ENCODE measurements at regions of chr15 and their contacts with region 1.

Region 1: GRCh38 chr15:89874926-89875564 is 18.7 kb downstream of the AP3S2 start:
- DNase-seq: peak; percentile 84
- H3K4me3 Mint-ChIP-seq: no peak overlapping the region
- H3K27ac Mint-ChIP-seq: no peak overlapping the region
- H3K4me1 Mint-ChIP-seq: peaks cover 5% of the 10 kb centered on the region
- H3K27me3 Mint-ChIP-seq: no peaks in the 10 kb centered on the region

Region 2: GRCh38 chr15:89750560-89751542 is 124.2 kb before region 1 on chr15 and contains the start of gene MESP1:
- CTCF ChIA-PET with region 1: interaction called, 22 read pairs
- POLR2A ChIA-PET with region 1: no interaction called
- DNase-seq: peak; percentile 90
- H3K4me3 Mint-ChIP-seq: peak within 1 kb of the TSS; percentile 68
- H3K27ac Mint-ChIP-seq: no peak within 1 kb of the TSS
- H3K4me1 Mint-ChIP-seq: peaks cover 6% of the 10 kb centered on the region
- H3K27me3 Mint-ChIP-seq: peaks cover 14% of the 10 kb centered on the region
- total RNA-seq, gene MESP1: 3.2 to 3.5 TPM

Region 3: DNA sequence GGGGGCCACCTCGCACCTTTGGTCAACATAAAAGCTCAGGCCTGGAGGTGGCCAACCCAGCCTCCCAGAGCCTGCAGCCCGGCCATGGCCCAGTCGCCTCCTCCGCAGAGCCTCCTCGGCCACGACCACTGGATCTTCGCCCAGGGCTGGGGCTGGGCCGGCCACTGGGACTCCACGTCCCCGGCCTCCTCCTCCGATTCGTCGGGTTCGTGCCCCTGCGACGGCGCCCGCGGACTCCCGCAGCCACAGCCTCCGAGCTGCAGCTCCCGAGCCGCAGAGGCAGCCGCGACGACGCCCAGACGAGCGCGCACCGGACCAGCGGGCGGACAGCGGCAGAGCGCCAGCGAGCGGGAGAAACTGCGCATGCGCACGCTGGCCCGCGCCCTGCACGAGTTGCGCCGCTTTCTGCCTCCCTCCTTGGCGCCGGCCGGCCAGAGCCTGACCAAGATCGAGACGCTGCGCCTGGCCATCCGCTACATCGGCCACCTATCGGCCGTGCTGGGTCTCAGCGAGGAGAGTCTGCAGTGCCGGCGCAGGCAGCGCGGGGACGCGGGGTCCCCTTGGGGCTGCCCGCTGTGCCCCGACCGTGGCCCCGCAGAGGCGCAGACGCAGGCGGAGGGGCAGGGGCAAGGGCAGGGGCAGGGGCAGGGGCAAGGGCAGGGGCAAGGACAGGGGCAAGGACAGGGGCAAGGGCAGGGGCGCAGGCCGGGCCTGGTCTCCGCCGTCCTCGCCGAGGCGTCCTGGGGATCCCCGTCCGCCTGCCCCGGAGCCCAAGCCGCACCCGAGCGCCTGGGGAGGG is 98.6 kb before region 1 on chr15 and contains the start of gene MESP2:
- CTCF ChIA-PET with region 1: interaction called, 19 read pairs
- POLR2A ChIA-PET with region 1: no interaction called
- DNase-seq: peak; percentile 58
- H3K4me3 Mint-ChIP-seq: peak within 1 kb of the TSS; percentile 66
- H3K27ac Mint-ChIP-seq: no peak within 1 kb of the TSS
- H3K4me1 Mint-ChIP-seq: peaks cover 20% of the 10 kb centered on the region
- H3K27me3 Mint-ChIP-seq: peaks cover 5% of the 10 kb centered on the region
- total RNA-seq, gene MESP2: not detected

Region 4: GRCh38 chr15:89836255-89837133 is 38.6 kb before region 1 on chr15:
- CTCF ChIA-PET with region 1: interaction called, 13 read pairs
- POLR2A ChIA-PET with region 1: no interaction called
- DNase-seq: no peak
- H3K4me3 Mint-ChIP-seq: no peak overlapping the region
- H3K27ac Mint-ChIP-seq: no peak overlapping the region
- H3K4me1 Mint-ChIP-seq: peaks cover 11% of the 10 kb centered on the region
- H3K27me3 Mint-ChIP-seq: no peaks in the 10 kb centered on the region

Region 5: GRCh38 chr15:89863918-89864317 is 11.1 kb before region 1 on chr15:
- CTCF ChIA-PET with region 1: interaction called, 14 read pairs
- POLR2A ChIA-PET with region 1: no interaction called
- DNase-seq: no peak
- H3K4me3 Mint-ChIP-seq: no peak overlapping the region
- H3K27ac Mint-ChIP-seq: no peak overlapping the region
- H3K4me1 Mint-ChIP-seq: peaks cover 9% of the 10 kb centered on the region
- H3K27me3 Mint-ChIP-seq: no peaks in the 10 kb centered on the region

Region 6: DNA sequence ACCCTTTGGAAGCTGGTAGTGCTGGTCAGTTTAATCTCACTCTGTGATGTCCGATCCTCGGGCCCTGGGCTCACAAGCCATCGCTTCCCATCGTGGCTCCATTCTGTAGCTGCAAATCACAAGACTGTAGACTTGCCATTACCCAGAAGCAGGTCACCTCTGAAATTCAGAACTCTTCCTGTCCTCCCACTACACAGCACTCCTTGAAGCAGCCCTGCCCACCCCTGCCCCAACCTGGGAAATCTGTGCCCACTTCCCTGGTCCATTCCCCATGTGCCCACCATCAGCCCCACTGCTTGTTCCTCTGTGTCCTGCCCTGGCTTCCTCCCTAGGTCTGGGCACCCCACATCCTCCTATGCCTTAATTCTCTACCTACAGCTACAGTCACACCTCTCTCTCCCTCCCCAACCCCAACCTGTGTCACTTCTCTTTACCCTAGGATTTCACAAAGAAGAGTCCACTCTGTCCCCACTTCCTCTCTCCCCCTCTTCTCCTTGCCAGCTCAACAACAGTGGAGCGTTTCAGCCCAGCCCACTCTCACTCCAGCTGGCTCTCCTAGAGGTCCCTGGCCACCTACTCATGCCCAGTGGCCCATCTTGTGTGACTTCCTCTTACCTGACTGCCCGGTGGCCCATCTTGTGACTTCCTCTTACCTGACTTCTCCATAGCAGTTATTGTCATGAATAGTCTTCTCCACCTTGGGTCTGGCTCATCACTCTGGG is 134.4 kb after region 1 on chr15:
- CTCF ChIA-PET with region 1: no interaction called
- POLR2A ChIA-PET with region 1: no interaction called
- DNase-seq: no peak
- H3K4me3 Mint-ChIP-seq: no peak overlapping the region
- H3K27ac Mint-ChIP-seq: peak overlapping the region; percentile 36
- H3K4me1 Mint-ChIP-seq: peaks cover 66% of the 10 kb centered on the region
- H3K27me3 Mint-ChIP-seq: no peaks in the 10 kb centered on the region

Region 7: DNA sequence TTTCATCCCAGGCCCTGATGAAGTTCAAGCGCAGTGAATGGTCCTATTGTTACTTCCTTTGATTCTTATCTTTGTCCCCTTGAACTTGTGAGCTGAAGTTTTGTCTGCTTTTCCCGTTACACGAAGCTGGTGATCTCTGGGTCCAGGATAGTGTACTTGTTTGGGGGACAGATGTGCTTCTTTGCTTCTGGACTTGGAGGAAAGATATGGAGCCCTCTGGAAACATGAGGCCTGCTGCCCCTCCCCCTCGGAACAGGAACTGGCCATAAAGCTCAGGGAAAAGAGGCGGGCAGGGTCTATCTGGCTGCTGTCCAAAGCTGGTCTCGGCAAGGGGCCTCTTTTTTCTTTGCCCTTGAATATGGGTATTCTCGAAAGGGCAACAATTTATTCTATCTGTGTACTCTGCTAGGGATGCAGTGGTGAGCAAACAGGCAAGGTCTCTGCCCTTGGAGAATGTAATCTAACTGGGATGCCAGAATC is 179.6 kb after region 1 on chr15:
- CTCF ChIA-PET with region 1: no interaction called
- POLR2A ChIA-PET with region 1: no interaction called
- DNase-seq: no peak
- H3K4me3 Mint-ChIP-seq: no peak overlapping the region
- H3K27ac Mint-ChIP-seq: no peak overlapping the region
- H3K4me1 Mint-ChIP-seq: peaks cover 19% of the 10 kb centered on the region
- H3K27me3 Mint-ChIP-seq: no peaks in the 10 kb centered on the region

Region 8: GRCh38 chr15:90086868-90087268 is 211.8 kb after region 1 on chr15:
- CTCF ChIA-PET with region 1: interaction called, 14 read pairs
- POLR2A ChIA-PET with region 1: interaction called, 3 read pairs
- DNase-seq: peak; percentile 63
- H3K4me3 Mint-ChIP-seq: no peak overlapping the region
- H3K27ac Mint-ChIP-seq: no peak overlapping the region
- H3K4me1 Mint-ChIP-seq: peaks cover 16% of the 10 kb centered on the region
- H3K27me3 Mint-ChIP-seq: no peaks in the 10 kb centered on the region